Activated CD4-positive, alpha-beta T cell treated with anti-CD3 and anti-CD28 coated beads for 36 hours (primary cell): ENCODE measurements at regions of chr1 and their contacts with region 1.

Region 1: GRCh38 chr1:111755331-111756123 is at the start of gene DDX20:
- DNase-seq: peak; percentile 97
- ATAC-seq: peak; percentile 90
- H3K4me3 Mint-ChIP-seq: peak within 1 kb of the TSS; percentile 83
- H3K27ac Mint-ChIP-seq: peak within 1 kb of the TSS; percentile 98
- H3K4me1 Mint-ChIP-seq: peaks cover 35% of the 10 kb centered on the region
- H3K27me3 Mint-ChIP-seq: no peaks in the 10 kb centered on the region
- total RNA-seq, gene DDX20: 13.5 to 13.6 TPM

Region 2: DNA sequence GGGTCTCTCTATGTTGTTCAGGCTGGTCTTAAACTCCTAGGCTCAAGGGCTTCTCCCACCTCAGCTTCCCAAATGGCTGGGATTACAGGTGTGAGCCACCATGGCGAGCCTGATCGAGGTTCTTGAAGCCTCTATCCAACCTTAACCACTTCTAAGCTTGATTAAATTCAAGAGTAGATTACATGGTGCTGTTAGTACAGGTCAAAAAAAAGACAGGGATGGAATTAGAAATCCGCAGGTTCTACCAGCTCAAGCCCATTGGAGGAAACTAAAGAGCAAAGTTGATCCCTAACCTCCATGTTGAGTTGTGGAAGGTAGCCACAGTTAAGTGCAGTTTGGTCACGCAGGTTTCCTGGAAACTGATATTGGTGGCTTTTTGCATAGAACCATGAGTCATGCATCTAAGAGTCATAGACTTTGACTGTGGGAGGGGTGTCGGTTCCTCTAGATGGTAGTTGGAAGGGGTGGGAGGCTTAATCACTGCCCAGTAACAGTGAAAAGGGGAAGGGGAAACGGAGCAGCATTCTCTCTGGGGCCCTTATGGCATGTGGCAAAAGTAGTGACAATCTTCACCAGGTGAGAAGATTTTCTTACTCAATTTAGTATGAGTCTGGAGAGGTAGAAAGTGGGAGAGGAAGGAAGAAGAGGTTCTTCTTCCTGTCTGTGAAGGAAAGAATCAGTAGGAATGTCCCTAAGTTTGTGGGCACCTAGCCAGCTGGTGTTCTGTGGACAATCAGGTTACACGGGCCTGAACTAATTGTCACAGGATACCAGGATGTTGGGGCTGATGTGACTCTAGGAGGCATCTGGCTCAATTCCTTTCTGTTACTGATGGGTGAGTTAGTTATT is 875.5 kb before region 1 on chr1:
- CTCF ChIA-PET with region 1: no interaction called
- POLR2A ChIA-PET with region 1: no interaction called
- intact Hi-C with region 1: loop called in 1 of 2 experiments (anchors 5 kb)
- DNase-seq: peak; percentile 77
- ATAC-seq: peak; percentile 66
- H3K4me3 Mint-ChIP-seq: peak overlapping the region; percentile 85
- H3K27ac Mint-ChIP-seq: peak overlapping the region; percentile 100
- H3K4me1 Mint-ChIP-seq: peaks cover 63% of the 10 kb centered on the region
- H3K27me3 Mint-ChIP-seq: no peaks in the 10 kb centered on the region

Region 3: DNA sequence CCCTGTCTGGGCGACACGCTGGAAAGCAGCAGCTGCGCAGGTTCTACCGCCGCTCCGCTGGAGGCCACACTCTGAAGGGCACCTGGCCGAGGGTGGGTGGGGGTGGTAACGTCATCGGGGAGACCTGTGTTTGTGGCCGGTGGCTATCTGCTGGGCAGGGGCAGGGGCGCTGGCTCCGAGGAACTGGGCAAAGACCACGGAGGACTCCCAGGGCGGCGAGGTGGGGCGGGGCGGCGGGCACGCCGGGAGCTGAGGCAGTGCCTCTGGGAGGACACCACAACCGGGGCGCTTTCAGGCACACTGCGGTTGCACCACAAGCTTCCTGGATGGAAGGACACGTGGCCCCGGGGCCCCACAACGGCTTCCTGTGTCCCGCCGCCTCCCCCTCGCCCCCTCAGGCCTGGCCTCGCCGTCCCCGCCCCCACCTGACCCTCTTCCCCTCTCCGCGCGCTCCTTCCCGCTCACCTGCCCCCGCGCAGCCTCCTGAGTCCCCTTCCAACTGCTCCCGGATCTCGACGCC is 551.8 kb before region 1 on chr1:
- CTCF ChIA-PET with region 1: no interaction called
- POLR2A ChIA-PET with region 1: no interaction called
- intact Hi-C with region 1: loop called in 1 of 2 experiments (anchors 5 kb)
- DNase-seq: peak; percentile 92
- ATAC-seq: peak; percentile 27
- H3K4me3 Mint-ChIP-seq: peak overlapping the region; percentile 96
- H3K27ac Mint-ChIP-seq: peak overlapping the region; percentile 98
- H3K4me1 Mint-ChIP-seq: peaks cover 56% of the 10 kb centered on the region
- H3K27me3 Mint-ChIP-seq: no peaks in the 10 kb centered on the region

Region 4: GRCh38 chr1:111399792-111400610 is 355.5 kb before region 1 on chr1:
- CTCF ChIA-PET with region 1: interaction called, 4 read pairs
- POLR2A ChIA-PET with region 1: no interaction called
- intact Hi-C with region 1: loop called in 1 of 2 experiments (anchors 1 kb)
- DNase-seq: peak; percentile 65
- ATAC-seq: no peak
- H3K4me3 Mint-ChIP-seq: no peak overlapping the region
- H3K27ac Mint-ChIP-seq: no peak overlapping the region
- H3K4me1 Mint-ChIP-seq: peaks cover 34% of the 10 kb centered on the region
- H3K27me3 Mint-ChIP-seq: no peaks in the 10 kb centered on the region

Region 5: GRCh38 chr1:111481387-111482221 is 273.9 kb before region 1 on chr1:
- CTCF ChIA-PET with region 1: interaction called, 7 read pairs
- POLR2A ChIA-PET with region 1: no interaction called
- intact Hi-C with region 1: loop called in 1 of 2 experiments (anchors 2 kb)
- DNase-seq: peak; percentile 83
- ATAC-seq: peak; percentile 80
- H3K4me3 Mint-ChIP-seq: no peak overlapping the region
- H3K27ac Mint-ChIP-seq: no peak overlapping the region
- H3K4me1 Mint-ChIP-seq: peaks cover 24% of the 10 kb centered on the region
- H3K27me3 Mint-ChIP-seq: no peaks in the 10 kb centered on the region

Region 6: GRCh38 chr1:111720274-111720976 is 35.1 kb before region 1 on chr1:
- CTCF ChIA-PET with region 1: interaction called, 44 read pairs
- POLR2A ChIA-PET with region 1: no interaction called
- intact Hi-C with region 1: loop called (anchors 1 to 2 kb)
- DNase-seq: no peak
- ATAC-seq: no peak
- H3K4me3 Mint-ChIP-seq: no peak overlapping the region
- H3K27ac Mint-ChIP-seq: no peak overlapping the region
- H3K4me1 Mint-ChIP-seq: peaks cover 16% of the 10 kb centered on the region
- H3K27me3 Mint-ChIP-seq: no peaks in the 10 kb centered on the region

Region 7: DNA sequence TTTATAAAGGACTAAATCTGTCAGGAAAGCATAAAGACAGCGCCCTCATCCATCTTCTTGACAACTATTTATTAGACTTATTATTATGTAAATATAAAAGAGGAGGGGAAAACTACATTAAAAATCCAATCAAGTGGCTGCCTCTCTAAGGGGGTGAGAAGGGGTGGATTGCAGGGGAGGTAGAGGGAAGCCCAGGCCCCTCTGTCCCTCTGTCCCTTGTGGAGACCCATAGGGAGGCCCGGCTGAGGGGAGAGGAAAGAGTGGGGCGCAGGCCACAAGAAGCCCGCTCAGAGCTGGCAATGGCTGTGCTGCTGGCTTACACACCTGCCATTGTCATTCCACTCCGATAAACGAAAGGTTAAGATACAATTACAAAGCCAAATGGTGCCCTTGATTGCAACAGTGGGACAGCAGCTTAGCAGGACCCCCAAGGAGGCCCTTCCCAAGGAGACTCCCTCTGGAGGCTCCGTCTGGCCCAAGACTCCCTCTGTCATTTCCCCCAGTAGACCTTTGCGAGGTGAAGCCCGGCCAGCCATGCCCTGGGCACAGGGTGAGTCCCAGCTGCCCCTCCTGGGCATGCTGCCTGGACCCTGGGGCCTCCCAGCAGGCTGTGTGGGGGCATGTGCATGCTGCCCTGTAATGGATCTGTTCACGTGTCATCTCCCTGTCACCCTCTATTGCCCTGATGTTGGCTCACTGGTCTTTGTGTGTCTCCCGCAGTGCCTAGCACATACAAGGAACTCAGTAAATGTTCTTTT is 188.6 kb after region 1 on chr1:
- CTCF ChIA-PET with region 1: no interaction called
- POLR2A ChIA-PET with region 1: no interaction called
- intact Hi-C with region 1: no loop called
- DNase-seq: no peak
- ATAC-seq: no peak
- H3K4me3 Mint-ChIP-seq: no peak overlapping the region
- H3K27ac Mint-ChIP-seq: no peak overlapping the region
- H3K4me1 Mint-ChIP-seq: no peaks in the 10 kb centered on the region
- H3K27me3 Mint-ChIP-seq: no peaks in the 10 kb centered on the region